Left ventricle myocardium superior (tissue), 1 donor: ENCODE measurements at regions of chr12 and their contacts with region 1.

Region 1: DNA sequence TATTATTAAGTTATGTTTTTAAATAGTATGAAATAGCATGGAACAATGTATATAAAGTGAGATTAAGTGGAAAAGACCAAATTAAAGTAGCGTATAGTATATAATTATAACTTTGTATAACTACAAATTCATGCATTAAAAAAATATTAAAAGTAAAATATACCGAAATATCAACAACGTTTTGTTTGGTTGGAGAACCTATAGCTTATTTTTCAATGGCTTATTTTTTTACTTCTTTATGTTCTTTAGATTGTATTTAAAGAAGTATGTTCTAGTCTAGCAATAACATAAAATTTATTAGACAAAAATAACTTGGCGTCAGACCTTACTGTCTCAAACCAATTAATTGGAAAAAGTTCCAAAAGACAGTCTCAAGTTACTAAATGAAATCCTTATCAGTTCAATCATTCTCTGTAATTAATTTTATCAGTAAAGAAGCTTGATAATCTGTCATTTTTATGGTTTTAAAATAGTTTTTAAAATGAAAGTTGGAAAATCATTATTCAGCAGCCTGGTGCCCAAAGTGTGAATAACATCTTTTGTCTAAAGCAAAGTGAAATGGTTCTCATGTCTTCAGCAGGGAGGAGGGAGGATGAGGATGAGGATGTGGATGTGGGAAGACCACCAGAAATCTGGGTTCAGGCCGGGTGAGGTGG is 46.7 kb downstream of the IRAK3 start:
- DNase-seq: no peak
- ATAC-seq: no peak

Region 2: GRCh38 chr12:66169221-66170170 is 66.3 kb before region 1 on chr12 and contains the start of gene TMBIM4:
- intact Hi-C with region 1: loop called (anchors 10 kb)
- DNase-seq: peak; percentile 91
- ATAC-seq: peak; percentile 97
- total RNA-seq, gene TMBIM4: 65.9 TPM